ENCODE measurements at regions of chr1 and their contacts with region 1.

Region 1: DNA sequence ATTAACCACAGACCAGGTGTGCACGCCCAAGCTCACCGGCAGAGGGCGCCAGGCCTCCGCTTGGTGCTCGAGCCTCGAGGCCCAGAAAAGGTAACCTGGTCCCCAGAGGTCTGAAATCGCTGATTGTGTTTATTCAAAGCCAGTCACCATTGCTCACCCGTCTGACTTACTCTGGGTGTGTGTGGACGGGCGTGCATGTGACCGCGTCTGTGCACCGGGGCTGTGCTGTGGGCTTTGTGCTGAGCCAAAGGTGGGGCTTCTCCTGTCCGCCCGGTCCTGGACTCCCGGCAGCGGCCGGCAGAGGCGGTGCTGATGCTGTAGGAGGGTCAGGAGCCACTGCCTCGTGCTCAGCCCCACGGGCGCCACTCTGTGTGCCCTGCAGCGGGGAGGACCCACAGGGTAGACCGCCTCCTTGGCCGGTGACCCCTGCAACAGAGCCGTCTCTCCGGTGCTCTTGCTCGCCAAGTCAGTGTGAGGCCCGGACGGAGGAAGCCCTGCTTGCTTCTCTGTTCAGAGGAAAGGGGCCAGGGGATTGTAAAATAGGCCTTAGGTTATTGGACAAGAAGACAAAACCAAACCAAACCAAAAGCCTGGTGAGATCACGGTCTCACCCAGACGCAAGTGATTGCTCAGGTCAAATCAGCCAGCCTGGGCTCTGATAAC is 32.0 kb upstream of the BTG2 start:
- DNase-seq: peak; percentile 79
- CTCF ChIP-seq: peak; percentile 99

Region 2: DNA sequence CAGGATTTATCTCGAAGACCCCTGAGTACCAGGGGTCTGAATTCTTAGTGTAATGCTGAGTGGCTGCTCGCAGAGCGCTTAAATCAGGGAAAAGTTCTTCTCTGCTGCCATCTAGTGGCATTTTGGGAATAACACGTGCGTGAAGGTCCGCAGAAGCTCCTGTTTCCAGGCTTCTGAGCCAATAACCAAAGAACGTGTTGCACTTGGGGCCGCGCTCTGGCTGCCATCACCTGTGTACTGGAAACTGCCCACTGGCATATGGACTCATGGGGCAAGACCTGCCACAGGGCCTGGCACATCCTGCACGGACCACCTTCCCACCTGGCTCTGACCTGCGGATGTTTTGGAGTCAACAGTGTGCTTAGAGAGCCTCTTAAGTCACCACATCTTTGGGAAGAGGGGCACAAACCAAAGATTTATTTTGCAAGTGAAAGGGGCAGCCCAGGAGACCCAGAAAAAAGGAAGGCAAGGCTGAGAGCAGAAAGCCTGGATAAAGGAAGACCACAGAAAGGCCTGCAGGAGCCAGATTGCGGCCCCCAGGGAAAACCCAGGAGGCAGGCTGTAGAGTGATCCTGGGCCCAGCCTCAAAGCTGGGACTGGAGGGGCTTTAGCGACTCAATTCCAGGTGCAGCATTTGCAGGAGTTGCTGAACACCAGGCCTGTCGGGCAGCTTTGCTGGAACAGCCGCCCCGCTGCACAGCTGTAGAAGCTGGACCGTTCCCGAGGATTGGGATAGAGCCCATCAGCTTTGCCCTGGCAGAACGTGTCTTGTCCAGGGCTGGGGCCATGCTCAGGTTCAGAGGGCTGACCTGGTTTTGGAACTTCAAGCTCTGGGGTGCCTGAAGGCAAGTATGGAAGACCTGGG is 56.8 kb before region 1 on chr1:
- in situ Hi-C with region 1: no loop called
- DNase-seq: peak; percentile 81
- CTCF ChIP-seq: peak; percentile 69

Region 3: DNA sequence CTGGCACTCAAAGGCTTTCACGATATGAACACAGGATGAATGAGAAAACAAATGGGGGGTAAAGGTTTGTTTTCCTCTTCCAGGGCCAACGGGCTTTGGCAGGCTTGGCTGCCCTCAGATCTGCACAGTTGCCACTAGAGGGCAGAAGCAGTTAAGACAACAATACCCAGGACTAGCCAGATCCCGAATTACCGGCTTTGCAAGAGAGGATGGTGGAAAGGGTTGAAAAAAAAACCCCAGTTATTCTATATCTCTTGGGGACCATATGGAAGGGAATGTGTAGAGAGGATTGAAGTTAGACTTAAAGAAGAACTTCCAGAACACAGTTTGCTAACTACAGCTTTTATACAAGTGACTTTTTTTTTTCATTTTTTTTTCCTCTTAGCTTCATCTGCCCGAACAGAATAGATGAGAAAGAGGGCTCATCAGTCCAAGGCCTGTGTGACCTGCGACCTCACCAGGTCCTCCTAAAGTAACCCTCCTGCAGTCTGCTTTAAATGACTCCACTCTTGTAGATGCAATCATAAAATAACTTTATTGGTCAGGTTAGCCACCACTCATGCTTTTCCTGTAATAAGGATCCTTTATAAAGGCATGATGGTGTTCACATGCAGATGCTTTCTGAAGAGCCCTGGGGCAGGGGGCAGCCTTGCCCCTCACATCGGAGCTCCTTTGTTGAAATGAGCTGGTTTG is 66.9 kb after region 1 on chr1:
- in situ Hi-C with region 1: loop called (anchors 5 kb)
- DNase-seq: peak; percentile 83
- CTCF ChIP-seq: peak; percentile 86

Region 4: DNA sequence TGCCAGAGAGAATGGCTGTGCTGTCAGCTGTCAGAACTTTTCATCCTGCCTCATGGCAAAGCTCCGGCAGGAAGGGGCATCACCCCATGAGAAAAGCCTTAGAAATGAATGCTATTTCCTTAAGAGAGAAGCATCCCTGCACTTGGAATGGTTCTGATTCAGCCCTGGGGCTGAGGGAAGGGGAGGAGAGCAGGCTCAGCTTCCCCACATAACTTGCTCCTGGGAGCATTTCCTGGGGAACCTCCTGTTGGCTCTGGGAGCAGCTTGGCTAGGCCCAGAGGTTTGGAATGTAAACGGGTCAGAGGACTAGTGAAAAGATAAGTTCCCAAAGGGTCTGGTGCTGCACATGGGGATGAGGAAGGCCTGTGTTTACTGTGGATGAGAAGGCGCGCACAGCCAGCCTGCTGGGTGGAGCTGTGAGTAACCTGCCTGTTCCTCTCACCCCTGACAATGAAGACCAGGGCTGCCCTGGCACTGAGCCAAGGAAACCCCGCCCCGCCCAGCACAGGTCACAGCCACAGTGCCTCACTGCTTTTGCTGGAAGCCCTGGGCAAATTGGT is 207.3 kb after region 1 on chr1:
- in situ Hi-C with region 1: loop called (anchors 10 kb)
- DNase-seq: no peak
- CTCF ChIP-seq: no peak